CD14-positive monocyte (primary cell): ENCODE measurements at regions of chr1 and their contacts with region 1.

Region 1: DNA sequence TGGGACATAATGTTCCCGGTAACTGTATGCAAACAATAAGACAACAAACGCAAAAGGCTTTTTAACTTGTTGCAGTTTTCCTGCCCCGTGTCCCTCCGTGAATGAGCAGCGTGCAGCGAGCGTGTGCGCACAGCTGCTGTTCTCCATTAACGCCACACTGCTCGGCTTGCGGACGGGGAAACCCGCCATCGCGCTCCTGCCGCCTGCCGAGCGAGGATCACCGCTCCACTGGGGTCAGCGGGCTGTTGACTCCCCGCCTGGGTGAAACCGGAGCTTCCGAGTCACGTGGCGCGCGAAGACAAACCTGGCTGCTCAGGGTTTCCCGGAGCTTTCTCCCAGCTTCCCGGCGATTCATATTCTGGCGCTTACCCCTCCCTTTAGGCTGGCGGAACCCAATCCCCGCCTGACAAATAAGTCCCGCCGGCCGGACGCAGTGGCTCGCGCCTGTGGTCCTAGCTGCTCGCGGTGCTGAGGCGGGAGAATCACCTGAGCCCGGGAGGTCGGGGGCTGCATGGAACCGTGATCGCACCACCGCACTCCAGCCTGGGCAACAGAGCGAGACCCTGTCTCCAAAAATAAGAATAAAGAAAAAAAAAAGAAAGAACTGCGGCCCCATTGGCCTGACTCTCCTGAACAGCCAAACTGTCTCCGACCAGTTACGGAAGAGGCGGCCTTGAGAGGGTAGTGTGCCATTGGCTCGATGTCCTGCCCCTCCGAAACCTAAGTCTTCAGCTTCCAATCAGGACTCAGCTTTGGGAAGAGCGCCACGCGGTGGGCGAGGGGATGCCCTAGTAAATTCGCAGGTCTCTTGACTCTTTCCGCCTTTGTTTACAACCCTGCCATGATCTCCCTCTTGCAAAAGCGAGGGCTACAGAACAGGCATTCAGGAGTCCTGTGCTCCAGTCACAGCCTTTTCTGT is at the start of gene CREB3L4:
- DNase-seq: peak; percentile 90 to 94 (median 93)
- H3K4me3 ChIP-seq: peak within 1 kb of the TSS; percentile 67 to 91 (median 81)
- H3K4me3 Mint-ChIP-seq: peak within 1 kb of the TSS; percentile 95 to 97
- H3K27ac ChIP-seq: peak within 1 kb of the TSS; percentile 86 to 89
- H3K27ac Mint-ChIP-seq: peak within 1 kb of the TSS; percentile 91 to 98 (median 97)
- H3K4me1 ChIP-seq: peaks cover 43 to 50% of the 10 kb centered on the region in 2 donors
- H3K4me1 Mint-ChIP-seq: peaks cover 54% of the 10 kb centered on the region
- H3K27me3 ChIP-seq: no peaks in the 10 kb centered on the region
- H3K27me3 Mint-ChIP-seq: peaks cover 2 to 4% (median 2%) of the 10 kb centered on the region in 3 donors
- CTCF ChIP-seq: peak; percentile 26
- polyA plus RNA-seq, gene CREB3L4: 5.0 to 7.6 (median 6.8) TPM

Region 2: GRCh38 chr1:153742411-153743142 is 224.8 kb before region 1 on chr1:
- intact Hi-C with region 1: no loop called
- DNase-seq: peak; percentile 31 to 60 (median 33)
- H3K4me3 ChIP-seq: no peak overlapping the region
- H3K4me3 Mint-ChIP-seq: no peak overlapping the region
- H3K27ac ChIP-seq: peak overlapping the region in 1 of 2 donors; percentile 75
- H3K27ac Mint-ChIP-seq: peak overlapping the region; percentile 38 to 85 (median 83)
- H3K4me1 ChIP-seq: peaks cover 11 to 19% of the 10 kb centered on the region in 2 donors
- H3K4me1 Mint-ChIP-seq: peaks cover 29% of the 10 kb centered on the region
- H3K27me3 ChIP-seq: no peaks in the 10 kb centered on the region
- H3K27me3 Mint-ChIP-seq: peaks cover 0 to 4% (median 0%) of the 10 kb centered on the region in 3 donors
- CTCF ChIP-seq: no peak

Region 3: GRCh38 chr1:153790966-153791647 is 176.2 kb before region 1 on chr1:
- intact Hi-C with region 1: loop called in 1 of 2 experiments (anchors 5 kb)
- DNase-seq: peak; percentile 91 to 98 (median 95)
- H3K4me3 ChIP-seq: peak overlapping the region; percentile 25 to 70 (median 29)
- H3K4me3 Mint-ChIP-seq: peak overlapping the region; percentile 73 to 89
- H3K27ac ChIP-seq: peak overlapping the region; percentile 88 to 97
- H3K27ac Mint-ChIP-seq: peak overlapping the region; percentile 98 to 100 (median 99)
- H3K4me1 ChIP-seq: peaks cover 40 to 43% of the 10 kb centered on the region in 2 donors
- H3K4me1 Mint-ChIP-seq: peaks cover 45% of the 10 kb centered on the region
- H3K27me3 ChIP-seq: no peaks in the 10 kb centered on the region
- H3K27me3 Mint-ChIP-seq: peaks cover 1 to 5% (median 5%) of the 10 kb centered on the region in 3 donors
- CTCF ChIP-seq: no peak

Region 4: GRCh38 chr1:153946622-153947241 is 20.6 kb before region 1 on chr1 and contains the start of gene DENND4B:
- intact Hi-C with region 1: loop called in 1 of 2 experiments (anchors 2 kb)
- DNase-seq: peak; percentile 79 to 86 (median 85)
- H3K4me3 ChIP-seq: peak within 1 kb of the TSS; percentile 70 to 83 (median 83)
- H3K4me3 Mint-ChIP-seq: peak within 1 kb of the TSS; percentile 83 to 93
- H3K27ac ChIP-seq: peak within 1 kb of the TSS; percentile 100
- H3K27ac Mint-ChIP-seq: peak within 1 kb of the TSS; percentile 98 to 100 (median 100)
- H3K4me1 ChIP-seq: peaks cover 54 to 57% of the 10 kb centered on the region in 2 donors
- H3K4me1 Mint-ChIP-seq: peaks cover 55% of the 10 kb centered on the region
- H3K27me3 ChIP-seq: no peaks in the 10 kb centered on the region
- H3K27me3 Mint-ChIP-seq: peaks cover 0 to 2% (median 0%) of the 10 kb centered on the region in 3 donors
- CTCF ChIP-seq: peak; percentile 94
- polyA plus RNA-seq, gene DENND4B: 7.8 to 324 (median 10.9) TPM